ENCODE measurements at regions of chr10 and their contacts with region 1.

Region 1: DNA sequence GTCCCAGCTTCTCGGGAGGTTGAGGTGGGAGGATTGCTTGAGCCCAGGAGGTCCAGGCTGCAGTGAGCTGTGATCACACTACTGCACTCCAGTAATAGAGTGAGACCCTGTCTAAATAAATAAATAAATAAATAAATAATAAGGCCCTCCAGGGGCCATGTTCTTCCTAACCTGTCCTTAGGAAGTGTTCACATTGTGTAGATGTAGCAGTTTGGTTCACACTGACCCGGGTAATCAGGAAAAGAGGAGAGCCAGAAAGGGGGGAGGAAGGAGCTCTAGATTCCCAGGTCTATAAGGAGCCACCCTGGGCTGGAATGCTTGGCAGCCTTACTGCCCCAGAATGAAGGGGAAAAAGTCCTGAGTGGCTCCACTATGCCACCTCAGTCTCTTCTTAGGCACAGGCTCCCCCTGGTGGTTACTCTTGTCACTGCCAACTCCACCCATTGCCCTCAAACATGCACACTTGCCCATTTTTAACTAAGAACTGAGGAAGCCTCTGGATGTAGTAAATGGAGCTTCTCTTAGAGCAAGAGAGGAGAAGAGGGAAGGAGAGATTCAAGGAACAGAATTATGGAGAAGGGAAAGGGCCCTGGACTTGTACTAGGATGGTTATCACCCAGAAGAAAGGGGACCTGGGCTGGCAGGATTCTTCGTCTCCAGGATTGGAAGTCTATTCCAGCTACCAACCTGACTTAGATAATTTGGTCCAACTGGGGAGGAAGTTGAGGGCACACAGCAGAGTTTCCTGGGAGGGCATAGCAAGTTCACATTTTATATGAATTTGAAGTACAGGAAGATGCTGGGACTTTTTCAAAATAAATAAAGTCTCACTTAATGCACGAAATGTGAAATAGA is 7.8 kb downstream of the HPS6 start:
- DNase-seq: peak; percentile 81 to 85
- H3K4me3 ChIP-seq: no peak overlapping the region
- H3K4me3 Mint-ChIP-seq: no peak overlapping the region
- H3K27ac Mint-ChIP-seq: no peak overlapping the region
- H3K4me1 ChIP-seq: no peaks in the 10 kb centered on the region
- H3K4me1 Mint-ChIP-seq: no peaks in the 10 kb centered on the region
- H3K27me3 ChIP-seq: no peaks in the 10 kb centered on the region
- H3K27me3 Mint-ChIP-seq: no peaks in the 10 kb centered on the region
- CTCF ChIP-seq: peak; percentile 95

Region 2: DNA sequence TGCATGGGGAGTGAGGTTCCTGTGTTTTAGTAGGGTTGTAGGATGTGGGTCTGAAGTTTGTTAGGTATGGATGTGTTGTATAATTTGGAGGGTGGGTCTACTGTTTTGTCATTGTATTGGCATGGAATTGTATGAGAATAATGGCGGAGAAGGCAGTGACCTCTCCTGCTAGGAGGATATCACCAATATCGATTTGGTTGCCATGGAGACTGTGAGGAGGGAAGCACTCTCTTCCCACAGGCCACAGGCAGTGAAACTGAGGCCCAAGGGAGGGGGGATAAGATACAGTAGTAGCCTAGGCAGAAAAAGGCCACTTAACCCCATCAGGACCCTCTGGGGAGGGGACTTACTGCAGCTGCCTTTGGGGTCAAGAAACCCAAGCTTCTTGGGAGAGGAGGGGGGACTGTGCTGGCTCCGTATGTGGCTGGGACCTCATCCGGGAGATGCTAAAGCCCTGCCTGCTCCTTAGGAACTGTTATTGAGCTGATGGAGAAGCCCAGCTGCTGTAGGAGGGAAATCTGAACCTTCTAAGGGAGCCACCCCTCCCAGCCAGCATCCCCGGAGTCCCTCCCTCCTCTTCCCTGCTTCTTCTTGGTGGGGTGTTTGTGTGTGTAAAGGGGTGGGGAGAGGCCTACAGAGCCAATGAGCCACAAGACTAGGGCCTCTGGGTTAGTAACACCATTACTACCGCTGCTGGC is 237.7 kb before region 1 on chr10:
- CTCF ChIA-PET with region 1: interaction called, 3 read pairs
- POLR2A ChIA-PET with region 1: no interaction called
- intact Hi-C with region 1: loop called (anchors 2 kb)
- DNase-seq: no peak
- H3K4me3 ChIP-seq: no peak overlapping the region
- H3K4me3 Mint-ChIP-seq: no peak overlapping the region
- H3K27ac Mint-ChIP-seq: peak overlapping the region; percentile 3
- H3K4me1 ChIP-seq: peaks cover 28% of the 10 kb centered on the region
- H3K4me1 Mint-ChIP-seq: peaks cover 10% of the 10 kb centered on the region
- H3K27me3 ChIP-seq: no peaks in the 10 kb centered on the region
- H3K27me3 Mint-ChIP-seq: no peaks in the 10 kb centered on the region
- CTCF ChIP-seq: no peak

Region 3: DNA sequence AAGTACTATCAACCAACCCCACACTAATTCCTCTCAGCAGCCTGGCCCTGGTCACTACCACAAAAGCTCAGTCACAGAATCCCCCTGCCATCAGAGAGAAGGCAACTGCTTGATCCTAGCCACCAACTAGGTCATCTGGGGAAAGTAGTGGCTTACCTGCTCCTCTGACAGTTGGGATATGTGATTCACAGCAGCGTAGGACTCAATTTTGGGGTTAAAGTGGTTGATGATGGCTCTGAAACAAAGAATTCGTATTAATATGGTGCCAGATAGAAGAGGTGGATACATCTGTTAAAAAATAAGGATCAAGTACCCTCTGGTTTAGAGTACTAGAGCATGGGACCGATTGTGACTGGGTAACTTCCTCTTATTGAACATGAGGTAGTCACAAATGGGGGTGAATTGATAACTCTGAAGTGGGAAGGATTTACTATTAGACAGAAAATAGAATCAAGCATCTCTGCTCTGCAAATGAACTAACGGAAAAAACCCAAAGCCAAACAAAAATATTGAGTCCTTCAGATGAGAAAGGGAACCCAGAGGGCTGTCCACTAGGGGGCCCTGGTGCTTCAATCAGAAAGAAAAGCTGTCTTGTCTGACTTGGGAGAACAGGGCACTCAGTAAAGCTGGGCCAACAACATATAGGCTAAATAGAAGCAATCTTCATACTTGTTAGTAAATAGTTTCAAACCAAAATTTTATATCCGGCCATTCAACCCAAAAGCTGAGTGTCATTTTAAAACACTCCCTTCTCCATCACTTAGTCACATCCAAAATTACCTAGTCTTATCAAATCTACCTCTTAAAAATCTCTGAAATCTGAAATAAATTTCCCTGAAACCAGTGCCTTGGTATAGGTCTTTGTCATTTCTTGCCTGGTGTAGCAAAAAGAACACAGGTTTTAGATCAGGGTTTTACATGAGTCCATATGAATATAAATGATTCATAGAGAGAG is 183.4 kb before region 1 on chr10:
- CTCF ChIA-PET with region 1: no interaction called
- POLR2A ChIA-PET with region 1: no interaction called
- intact Hi-C with region 1: loop called (anchors 1 kb)
- DNase-seq: peak; percentile 77 to 81
- H3K4me3 ChIP-seq: no peak overlapping the region
- H3K4me3 Mint-ChIP-seq: no peak overlapping the region
- H3K27ac Mint-ChIP-seq: no peak overlapping the region
- H3K4me1 ChIP-seq: no peaks in the 10 kb centered on the region
- H3K4me1 Mint-ChIP-seq: no peaks in the 10 kb centered on the region
- H3K27me3 ChIP-seq: no peaks in the 10 kb centered on the region
- H3K27me3 Mint-ChIP-seq: no peaks in the 10 kb centered on the region
- CTCF ChIP-seq: peak; percentile 84 to 93

Region 4: GRCh38 chr10:102090772-102091171 is 17.9 kb after region 1 on chr10:
- CTCF ChIA-PET with region 1: no interaction called
- POLR2A ChIA-PET with region 1: no interaction called
- intact Hi-C with region 1: no loop called
- DNase-seq: no peak
- H3K4me3 ChIP-seq: no peak overlapping the region
- H3K4me3 Mint-ChIP-seq: no peak overlapping the region
- H3K27ac Mint-ChIP-seq: no peak overlapping the region
- H3K4me1 ChIP-seq: no peaks in the 10 kb centered on the region
- H3K4me1 Mint-ChIP-seq: no peaks in the 10 kb centered on the region
- H3K27me3 ChIP-seq: no peaks in the 10 kb centered on the region
- H3K27me3 Mint-ChIP-seq: no peaks in the 10 kb centered on the region
- CTCF ChIP-seq: no peak

Region 5: DNA sequence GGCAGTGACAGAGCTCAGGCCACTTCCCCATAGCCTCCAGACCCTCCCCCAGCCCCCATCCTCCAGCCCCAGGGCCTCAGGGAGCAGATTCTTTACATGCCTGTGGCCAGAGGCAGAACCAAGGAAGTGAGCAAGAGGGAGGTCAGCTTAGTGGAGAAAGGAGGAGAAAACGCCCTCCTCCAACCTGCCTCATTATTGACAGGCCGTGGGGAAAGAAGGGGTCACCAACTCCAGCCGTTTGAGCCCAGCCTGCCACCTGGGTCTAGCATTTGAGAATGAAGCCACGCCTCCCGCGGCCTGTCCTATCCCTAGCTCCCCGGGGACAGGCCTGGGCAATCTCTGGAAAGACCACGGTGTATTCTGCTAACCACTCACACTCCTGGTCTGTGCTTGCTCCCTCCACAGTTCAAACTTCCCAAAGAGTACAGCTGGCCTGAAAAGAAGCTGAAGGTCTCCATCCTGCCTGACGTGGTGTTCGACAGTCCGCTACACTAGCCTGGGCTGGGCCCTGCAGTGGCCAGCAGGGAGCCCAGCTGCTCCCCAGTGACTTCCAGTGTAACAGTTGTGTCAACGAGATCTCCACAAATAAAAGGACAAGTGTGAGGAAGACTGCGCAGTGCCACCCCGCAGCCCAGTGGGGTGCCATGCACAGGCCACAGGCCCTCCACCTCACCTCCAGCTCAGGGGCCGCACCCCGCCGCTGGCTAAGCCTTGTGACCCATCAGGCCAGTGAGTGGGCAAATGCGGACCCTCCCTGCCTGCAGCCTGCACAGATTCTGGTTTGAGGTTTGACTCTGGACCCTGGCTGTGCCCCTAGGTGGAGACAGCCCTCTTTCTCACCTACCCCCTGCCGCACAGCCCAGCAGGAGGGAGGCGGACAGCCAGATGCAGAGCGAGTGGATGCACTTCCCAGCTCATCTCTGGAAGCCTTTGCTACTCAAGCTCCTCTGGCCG is 557.0 kb after region 1 on chr10:
- CTCF ChIA-PET with region 1: no interaction called
- POLR2A ChIA-PET with region 1: interaction called, 10 read pairs
- intact Hi-C with region 1: no loop called
- DNase-seq: peak; percentile 86 to 92
- H3K4me3 ChIP-seq: no peak overlapping the region
- H3K4me3 Mint-ChIP-seq: peak overlapping the region; percentile 25
- H3K27ac Mint-ChIP-seq: peak overlapping the region; percentile 88
- H3K4me1 ChIP-seq: peaks cover 44% of the 10 kb centered on the region
- H3K4me1 Mint-ChIP-seq: peaks cover 67% of the 10 kb centered on the region
- H3K27me3 ChIP-seq: no peaks in the 10 kb centered on the region
- H3K27me3 Mint-ChIP-seq: no peaks in the 10 kb centered on the region
- CTCF ChIP-seq: no peak